A673 (cell line): ENCODE measurements at regions of chr1 and their contacts with region 1.

Region 1: GRCh38 chr1:82844911-82845827 is 1044.4 kb downstream of the ADGRL2 start:
- DNase-seq: no peak
- H3K4me3 ChIP-seq: no peak overlapping the region
- H3K27ac ChIP-seq: no peak overlapping the region
- H3K4me1 ChIP-seq: no peaks in the 10 kb centered on the region
- H3K27me3 ChIP-seq: peaks cover 5% of the 10 kb centered on the region
- CTCF ChIP-seq: no peak

Region 2: GRCh38 chr1:82785268-82785790 is 59.8 kb before region 1 on chr1:
- CTCF ChIA-PET with region 1: no interaction called
- POLR2A ChIA-PET with region 1: no interaction called
- intact Hi-C with region 1: loop called (anchors 10 kb)
- DNase-seq: no peak
- H3K4me3 ChIP-seq: no peak overlapping the region
- H3K27ac ChIP-seq: no peak overlapping the region
- H3K4me1 ChIP-seq: no peaks in the 10 kb centered on the region
- H3K27me3 ChIP-seq: peaks cover 4% of the 10 kb centered on the region
- CTCF ChIP-seq: no peak

Region 3: DNA sequence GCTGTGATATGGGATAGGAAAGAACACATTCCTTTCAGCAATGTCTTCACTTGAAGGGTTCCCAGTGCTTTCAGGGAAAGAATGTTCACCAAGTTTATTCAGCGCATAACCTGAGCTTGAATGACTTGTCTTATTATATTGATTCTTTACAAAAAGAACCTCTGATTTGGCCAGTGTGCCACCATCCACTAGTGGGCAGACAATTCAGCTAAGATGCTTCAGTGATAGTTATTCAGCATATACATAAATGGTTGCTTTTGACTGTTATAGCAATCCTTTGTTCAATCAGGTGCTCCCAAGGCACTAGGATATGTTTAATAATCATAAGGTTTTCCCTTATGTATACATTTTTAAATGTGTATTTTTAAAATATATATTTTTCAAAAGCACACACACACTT is 43.9 kb after region 1 on chr1:
- CTCF ChIA-PET with region 1: no interaction called
- POLR2A ChIA-PET with region 1: no interaction called
- intact Hi-C with region 1: no loop called
- DNase-seq: no peak
- H3K4me3 ChIP-seq: no peak overlapping the region
- H3K27ac ChIP-seq: no peak overlapping the region
- H3K4me1 ChIP-seq: no peaks in the 10 kb centered on the region
- H3K27me3 ChIP-seq: no peaks in the 10 kb centered on the region
- CTCF ChIP-seq: no peak